ENCODE measurements at regions of chr6 and their contacts with region 1.

Region 1: GRCh38 chr6:16206595-16207037 is 31.8 kb upstream of the GMPR start:
- DNase-seq: peak; percentile 55
- ATAC-seq: peak; percentile 69
- H3K4me3 Mint-ChIP-seq: no peak overlapping the region
- H3K27ac Mint-ChIP-seq: no peak overlapping the region
- H3K4me1 Mint-ChIP-seq: peaks cover 2% of the 10 kb centered on the region
- H3K27me3 Mint-ChIP-seq: peaks cover 9% of the 10 kb centered on the region

Region 2: GRCh38 chr6:15522427-15522826 is 684.2 kb before region 1 on chr6:
- CTCF ChIA-PET with region 1: no interaction called
- POLR2A ChIA-PET with region 1: no interaction called
- intact Hi-C with region 1: loop called in 1 of 2 experiments (anchors 10 kb)
- DNase-seq: peak; percentile 16
- ATAC-seq: peak; percentile 17
- H3K4me3 Mint-ChIP-seq: no peak overlapping the region
- H3K27ac Mint-ChIP-seq: peak overlapping the region; percentile 57
- H3K4me1 Mint-ChIP-seq: peaks cover 24% of the 10 kb centered on the region
- H3K27me3 Mint-ChIP-seq: no peaks in the 10 kb centered on the region

Region 3: GRCh38 chr6:15691250-15691869 is 515.3 kb before region 1 on chr6:
- CTCF ChIA-PET with region 1: interaction called, 29 read pairs
- POLR2A ChIA-PET with region 1: no interaction called
- intact Hi-C with region 1: loop called (anchors 1 kb)
- DNase-seq: peak; percentile 91
- ATAC-seq: peak; percentile 99
- H3K4me3 Mint-ChIP-seq: no peak overlapping the region
- H3K27ac Mint-ChIP-seq: peak overlapping the region; percentile 61
- H3K4me1 Mint-ChIP-seq: peaks cover 14% of the 10 kb centered on the region
- H3K27me3 Mint-ChIP-seq: peaks cover 7% of the 10 kb centered on the region

Region 4: GRCh38 chr6:15893556-15894268 is 312.9 kb before region 1 on chr6:
- CTCF ChIA-PET with region 1: interaction called, 8 read pairs
- POLR2A ChIA-PET with region 1: no interaction called
- intact Hi-C with region 1: loop called in 1 of 2 experiments (anchors 2 kb)
- DNase-seq: no peak
- ATAC-seq: no peak
- H3K4me3 Mint-ChIP-seq: no peak overlapping the region
- H3K27ac Mint-ChIP-seq: no peak overlapping the region
- H3K4me1 Mint-ChIP-seq: peaks cover 8% of the 10 kb centered on the region
- H3K27me3 Mint-ChIP-seq: peaks cover 2% of the 10 kb centered on the region

Region 5: DNA sequence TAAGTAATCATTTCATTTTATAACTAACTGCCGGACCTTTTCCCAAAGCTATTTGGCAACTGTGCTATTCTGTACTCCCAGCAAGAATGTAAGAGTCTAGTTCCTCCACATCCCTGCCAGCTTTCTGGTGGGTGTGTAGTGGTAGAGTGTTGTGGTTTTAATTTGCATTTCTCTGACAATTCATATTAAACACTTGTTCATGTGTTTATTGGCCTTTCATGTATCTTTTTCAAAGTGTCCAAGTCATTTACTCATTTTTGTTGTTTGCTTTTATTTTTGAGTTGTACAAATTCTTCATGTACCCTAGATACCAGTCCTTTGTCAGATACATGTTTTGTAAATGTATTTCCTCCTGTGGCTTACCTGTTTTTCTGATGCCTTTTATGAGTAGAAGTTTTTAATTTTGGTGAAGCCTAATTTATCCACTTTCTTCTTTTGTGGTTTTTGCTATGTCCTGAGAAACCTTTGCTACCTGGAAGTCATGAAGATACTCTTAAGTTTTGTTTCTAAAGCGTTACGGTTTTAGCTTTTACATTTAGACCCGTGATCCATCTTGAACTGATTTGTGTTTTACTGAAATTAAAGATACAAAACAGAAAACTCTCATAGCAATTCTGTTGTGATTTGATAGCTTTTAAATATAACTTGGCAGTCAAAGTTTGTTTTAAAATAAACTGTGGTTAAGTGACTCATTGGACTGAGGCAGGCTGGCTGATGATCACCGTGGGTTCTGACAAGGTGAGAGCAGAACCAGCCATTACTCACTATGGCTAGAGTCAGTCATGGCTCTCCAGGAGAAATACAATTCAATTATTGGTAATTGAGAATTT is 69.8 kb before region 1 on chr6:
- CTCF ChIA-PET with region 1: interaction called, 5 read pairs
- POLR2A ChIA-PET with region 1: interaction called, 4 read pairs
- intact Hi-C with region 1: loop called in 1 of 2 experiments (anchors 2 kb)
- DNase-seq: peak; percentile 75
- ATAC-seq: peak; percentile 89
- H3K4me3 Mint-ChIP-seq: peak overlapping the region; percentile 56
- H3K27ac Mint-ChIP-seq: peak overlapping the region; percentile 86
- H3K4me1 Mint-ChIP-seq: peaks cover 79% of the 10 kb centered on the region
- H3K27me3 Mint-ChIP-seq: no peaks in the 10 kb centered on the region

Region 6: DNA sequence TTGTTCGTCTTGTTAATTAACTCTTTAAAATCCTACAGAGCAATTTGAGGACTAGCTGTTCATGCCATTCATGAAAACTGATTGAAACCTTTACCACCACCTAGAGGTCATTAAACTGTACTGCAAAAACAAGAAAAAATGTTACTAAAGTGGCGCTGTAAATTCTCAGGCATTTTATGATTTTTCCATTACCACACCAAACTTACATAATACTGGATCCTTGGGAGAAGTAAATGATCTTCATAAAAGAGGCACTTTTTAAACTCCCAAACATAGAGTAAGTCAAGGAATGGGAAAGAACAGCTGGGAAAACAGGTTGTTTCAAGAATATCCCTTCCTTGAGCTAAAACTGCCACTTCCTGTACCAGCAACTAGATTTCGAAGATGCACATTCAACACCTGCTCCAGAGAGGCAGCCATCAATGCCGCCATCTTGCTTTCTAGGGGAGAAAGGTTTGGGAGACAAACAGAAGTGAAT is 23.4 kb before region 1 on chr6:
- CTCF ChIA-PET with region 1: interaction called, 27 read pairs
- POLR2A ChIA-PET with region 1: no interaction called
- intact Hi-C with region 1: loop called in 1 of 2 experiments (anchors 1 kb)
- DNase-seq: no peak
- ATAC-seq: peak; percentile 48
- H3K4me3 Mint-ChIP-seq: no peak overlapping the region
- H3K27ac Mint-ChIP-seq: no peak overlapping the region
- H3K4me1 Mint-ChIP-seq: peaks cover 21% of the 10 kb centered on the region
- H3K27me3 Mint-ChIP-seq: peaks cover under 1% of the 10 kb centered on the region

Region 7: DNA sequence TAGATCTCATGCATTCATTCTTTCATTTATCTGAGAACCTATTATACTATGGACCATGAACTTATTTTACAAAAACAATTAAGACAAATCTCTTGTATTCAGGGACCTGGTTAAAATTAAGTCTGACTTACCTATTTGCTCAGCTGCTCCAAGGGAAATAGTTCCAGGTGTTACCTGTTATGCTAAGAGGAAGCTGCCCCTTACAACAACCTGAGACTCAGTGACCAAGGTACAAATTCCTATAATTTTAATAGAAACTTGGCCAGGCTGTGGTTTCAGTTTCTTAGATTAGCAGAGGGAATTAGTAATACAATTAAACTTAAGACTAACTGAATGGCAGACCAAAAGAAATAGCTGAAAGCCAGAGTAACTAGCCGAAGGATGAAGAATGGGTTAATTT is 16.4 kb before region 1 on chr6:
- CTCF ChIA-PET with region 1: interaction called, 27 read pairs
- POLR2A ChIA-PET with region 1: no interaction called
- intact Hi-C with region 1: no loop called
- DNase-seq: no peak
- ATAC-seq: no peak
- H3K4me3 Mint-ChIP-seq: no peak overlapping the region
- H3K27ac Mint-ChIP-seq: no peak overlapping the region
- H3K4me1 Mint-ChIP-seq: no peaks in the 10 kb centered on the region
- H3K27me3 Mint-ChIP-seq: peaks cover 10% of the 10 kb centered on the region

Region 8: DNA sequence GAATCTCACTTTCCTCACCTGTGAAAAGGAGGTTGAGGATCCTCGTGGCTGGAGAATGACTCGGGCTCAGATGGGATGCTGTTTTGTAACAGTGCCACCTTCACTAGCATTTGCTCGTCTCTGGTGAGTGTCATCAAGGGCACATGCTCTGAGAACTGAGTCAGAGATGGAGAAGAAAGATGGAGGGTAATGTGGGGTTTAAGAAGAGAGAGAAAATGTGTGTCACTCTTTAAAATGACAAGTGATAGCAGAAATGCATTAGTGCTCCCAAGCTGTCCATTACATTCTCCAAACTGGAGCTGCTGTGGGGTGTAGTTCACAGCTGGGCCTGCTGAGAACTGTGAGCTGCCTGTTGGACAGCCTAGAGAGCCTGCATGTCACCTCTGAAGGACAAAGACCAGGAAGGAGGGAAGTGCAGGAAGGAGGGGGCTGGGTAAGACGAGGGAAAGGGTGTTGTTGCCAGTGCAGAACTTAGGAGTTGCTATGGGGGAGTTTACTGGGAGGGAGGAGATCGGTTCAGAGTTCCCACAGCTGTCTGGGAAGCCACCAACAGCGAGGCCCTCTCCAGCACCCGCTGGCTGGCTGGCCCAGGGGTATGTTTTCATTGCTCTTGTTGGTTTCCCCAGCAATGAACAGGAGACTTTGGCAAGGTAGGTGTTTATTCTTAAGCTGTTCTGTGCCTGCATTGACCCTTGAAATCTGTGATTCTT is 51.5 kb after region 1 on chr6:
- CTCF ChIA-PET with region 1: no interaction called
- POLR2A ChIA-PET with region 1: no interaction called
- intact Hi-C with region 1: no loop called
- DNase-seq: peak; percentile 37
- ATAC-seq: peak; percentile 81
- H3K4me3 Mint-ChIP-seq: no peak overlapping the region
- H3K27ac Mint-ChIP-seq: no peak overlapping the region
- H3K4me1 Mint-ChIP-seq: peaks cover 5% of the 10 kb centered on the region
- H3K27me3 Mint-ChIP-seq: no peaks in the 10 kb centered on the region

Measured in activated CD4-positive, alpha-beta T cell treated with anti-CD3 and anti-CD28 coated beads for 36 hours (primary cell).